PC-9 (cell line): ENCODE measurements at regions of chr1 and their contacts with region 1.

Region 1: DNA sequence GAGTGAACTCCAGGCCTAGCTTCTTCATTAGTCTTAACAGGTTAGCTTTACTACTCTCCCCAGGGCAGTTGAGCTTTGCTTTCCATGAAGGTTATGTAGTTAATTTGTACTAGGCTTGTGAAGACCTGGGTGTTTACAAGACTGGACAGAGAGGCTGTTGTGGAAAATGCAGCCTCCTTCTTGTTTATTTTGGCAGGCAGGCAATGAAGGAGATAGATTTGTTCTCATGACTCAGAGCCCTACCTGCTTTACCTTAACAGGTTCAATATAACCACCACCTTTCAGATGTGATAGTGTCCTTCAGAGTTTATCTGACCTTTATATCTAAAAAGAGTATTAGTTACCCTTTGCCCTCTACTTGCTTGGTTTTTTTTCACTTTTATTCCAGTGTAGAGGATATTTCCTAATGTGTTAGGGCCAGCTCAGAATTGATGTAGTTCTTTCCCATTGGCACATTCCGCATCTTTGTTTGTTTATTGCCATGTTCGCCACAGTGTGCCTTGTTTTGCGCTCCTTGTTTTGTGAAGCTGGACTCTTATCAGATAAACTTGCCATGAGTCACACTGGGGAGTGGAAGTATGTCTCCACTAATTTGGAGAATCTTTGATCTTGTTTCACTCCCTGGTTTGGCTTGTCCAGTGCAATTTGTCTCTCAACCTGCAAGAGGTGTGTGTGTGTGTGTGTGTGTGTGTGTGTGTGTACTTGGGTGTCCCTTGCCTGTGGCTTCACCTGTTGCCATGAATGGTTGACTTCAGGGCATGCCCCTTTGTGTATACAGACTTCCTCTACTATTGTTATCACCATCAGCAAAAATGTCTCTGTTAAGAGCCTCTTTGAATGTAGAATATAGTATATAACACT is 87.4 kb upstream of the MACF1 start:
- DNase-seq: peak; percentile 65 to 95
- H3K4me3 ChIP-seq: no peak overlapping the region
- H3K27ac ChIP-seq: peak overlapping the region; percentile 68
- H3K4me1 ChIP-seq: peaks cover 48% of the 10 kb centered on the region
- H3K27me3 ChIP-seq: no peaks in the 10 kb centered on the region
- CTCF ChIP-seq: no peak

Region 2: DNA sequence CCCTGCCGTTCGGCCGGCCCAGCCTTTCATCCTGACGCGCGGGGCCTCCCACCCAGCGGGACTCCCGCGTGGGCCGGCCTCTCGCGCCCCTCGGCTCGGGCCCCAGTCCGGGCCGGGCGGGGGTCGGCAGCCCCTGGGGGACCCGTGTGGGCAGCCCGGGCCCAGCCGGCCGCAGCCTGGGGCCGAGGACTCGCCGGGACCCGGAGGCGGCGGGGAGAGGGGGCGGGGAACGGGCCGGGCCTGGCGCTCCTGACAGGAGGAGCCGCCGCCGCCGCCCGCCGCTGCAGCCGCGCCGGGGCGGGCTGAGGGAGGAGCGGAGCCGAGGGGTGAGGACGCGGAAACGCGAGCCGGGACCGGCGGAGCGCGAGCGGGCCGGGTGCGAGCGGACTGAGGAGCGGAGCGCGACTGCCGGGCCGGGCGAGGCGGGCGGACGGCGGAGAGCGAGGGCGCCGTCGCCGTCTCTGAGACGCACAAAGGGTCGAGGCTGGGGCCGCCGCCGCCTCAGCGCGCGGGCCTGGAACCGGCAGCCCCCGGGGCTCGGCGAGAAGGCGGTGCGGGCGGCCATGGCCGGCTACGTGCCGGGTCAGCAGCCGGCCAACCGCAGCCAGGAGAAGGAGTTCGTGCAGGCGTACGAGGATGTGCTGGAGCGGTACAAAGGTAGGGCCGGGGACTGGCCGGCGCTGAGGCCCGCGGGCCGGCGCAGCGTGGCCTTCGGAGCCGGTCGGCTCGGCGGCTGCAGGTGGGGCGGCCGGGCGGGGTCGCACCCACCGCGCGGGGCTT is 11.8 kb before region 1 on chr1:
- CTCF ChIA-PET with region 1: no interaction called
- POLR2A ChIA-PET with region 1: no interaction called
- intact Hi-C with region 1: loop called (anchors 1 kb)
- DNase-seq: peak in 1 of 2 experiments; percentile 81
- H3K4me3 ChIP-seq: peak overlapping the region; percentile 95
- H3K27ac ChIP-seq: peak overlapping the region; percentile 74
- H3K4me1 ChIP-seq: peaks cover 57% of the 10 kb centered on the region
- H3K27me3 ChIP-seq: no peaks in the 10 kb centered on the region
- CTCF ChIP-seq: no peak

Region 3: DNA sequence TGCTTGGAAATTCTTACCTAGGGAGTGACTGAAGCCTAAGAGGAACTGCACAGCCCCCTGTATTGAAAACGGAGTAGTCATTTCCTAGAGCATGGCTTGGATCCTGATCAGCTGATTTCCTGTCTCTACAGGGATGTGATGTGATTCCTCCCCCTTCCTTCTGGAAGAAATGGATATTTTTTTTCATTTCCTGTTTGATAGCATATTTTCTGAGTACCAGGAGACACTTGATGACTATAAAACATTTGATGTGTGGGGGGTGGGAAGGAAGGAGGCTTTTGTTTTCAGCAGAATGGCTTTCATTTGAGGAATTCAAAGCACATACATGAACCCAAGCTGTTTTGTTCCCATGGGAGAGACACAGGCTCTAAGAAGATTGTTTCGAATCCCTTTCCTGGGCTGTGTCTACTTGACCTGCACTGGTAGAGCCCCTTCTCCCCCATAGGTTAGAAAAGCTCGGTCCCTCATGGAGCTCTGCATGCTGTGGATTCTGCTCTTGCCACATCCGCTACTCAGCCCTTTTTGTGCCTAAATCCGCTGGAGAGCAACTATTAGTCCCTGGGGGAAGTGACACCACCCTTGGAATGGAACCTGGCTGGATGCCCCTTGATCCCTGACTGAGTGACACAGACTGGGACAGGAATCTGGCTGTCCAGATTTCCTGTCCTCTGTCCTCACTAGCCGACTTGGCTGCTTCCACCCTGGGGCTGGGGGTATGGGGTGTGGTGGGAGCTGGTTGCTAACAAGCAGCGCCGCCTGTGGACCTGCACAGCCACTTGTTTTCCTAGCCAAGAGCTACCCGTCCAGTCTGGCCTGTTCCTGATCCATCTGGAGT is 15.6 kb after region 1 on chr1:
- CTCF ChIA-PET with region 1: interaction called, 4 read pairs
- POLR2A ChIA-PET with region 1: interaction called, 4 read pairs
- intact Hi-C with region 1: loop called (anchors 2 kb)
- DNase-seq: peak; percentile 94 to 95
- H3K4me3 ChIP-seq: no peak overlapping the region
- H3K27ac ChIP-seq: peak overlapping the region; percentile 77
- H3K4me1 ChIP-seq: peaks cover 70% of the 10 kb centered on the region
- H3K27me3 ChIP-seq: no peaks in the 10 kb centered on the region
- CTCF ChIP-seq: peak; percentile 67

Region 4: DNA sequence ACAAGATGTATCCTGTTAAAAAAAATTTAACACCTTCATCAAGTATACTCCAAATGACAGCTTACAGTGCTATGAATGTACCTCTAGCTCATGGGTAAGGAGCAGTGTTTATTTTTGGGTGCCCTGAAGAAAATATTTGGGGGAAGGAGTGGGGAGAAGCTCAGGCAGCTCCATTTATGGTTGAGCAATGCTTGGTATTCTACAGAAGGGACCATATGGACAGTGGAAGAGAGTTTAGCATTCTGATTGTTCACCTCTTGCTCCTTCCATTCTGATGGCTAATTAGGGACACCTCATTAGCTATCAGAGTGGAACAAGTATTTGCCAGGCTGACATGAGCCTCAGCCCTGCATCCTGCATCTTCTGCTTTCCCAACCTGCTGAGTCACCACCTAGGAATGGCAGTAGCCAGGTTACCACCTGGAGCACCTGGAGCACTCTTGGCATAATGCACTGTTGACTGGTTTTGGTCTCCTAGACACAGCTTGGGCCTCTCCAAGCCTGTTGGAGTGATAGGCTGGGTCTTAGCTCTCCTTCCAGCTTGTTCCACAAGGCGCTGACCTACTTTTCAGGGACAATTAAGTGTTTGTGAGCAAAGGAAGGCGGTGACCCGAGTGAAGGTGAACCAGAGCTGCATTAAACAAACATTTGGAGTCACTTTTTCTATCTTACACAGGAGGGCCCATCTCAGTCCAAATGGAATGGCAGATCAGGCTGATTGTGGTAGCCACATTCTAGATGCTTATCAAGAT is 25.5 kb after region 1 on chr1:
- CTCF ChIA-PET with region 1: no interaction called
- POLR2A ChIA-PET with region 1: no interaction called
- intact Hi-C with region 1: loop called (anchors 1 kb)
- DNase-seq: peak; percentile 91 to 96
- H3K4me3 ChIP-seq: no peak overlapping the region
- H3K27ac ChIP-seq: peak overlapping the region; percentile 43
- H3K4me1 ChIP-seq: peaks cover 26% of the 10 kb centered on the region
- H3K27me3 ChIP-seq: no peaks in the 10 kb centered on the region
- CTCF ChIP-seq: no peak

Region 5: DNA sequence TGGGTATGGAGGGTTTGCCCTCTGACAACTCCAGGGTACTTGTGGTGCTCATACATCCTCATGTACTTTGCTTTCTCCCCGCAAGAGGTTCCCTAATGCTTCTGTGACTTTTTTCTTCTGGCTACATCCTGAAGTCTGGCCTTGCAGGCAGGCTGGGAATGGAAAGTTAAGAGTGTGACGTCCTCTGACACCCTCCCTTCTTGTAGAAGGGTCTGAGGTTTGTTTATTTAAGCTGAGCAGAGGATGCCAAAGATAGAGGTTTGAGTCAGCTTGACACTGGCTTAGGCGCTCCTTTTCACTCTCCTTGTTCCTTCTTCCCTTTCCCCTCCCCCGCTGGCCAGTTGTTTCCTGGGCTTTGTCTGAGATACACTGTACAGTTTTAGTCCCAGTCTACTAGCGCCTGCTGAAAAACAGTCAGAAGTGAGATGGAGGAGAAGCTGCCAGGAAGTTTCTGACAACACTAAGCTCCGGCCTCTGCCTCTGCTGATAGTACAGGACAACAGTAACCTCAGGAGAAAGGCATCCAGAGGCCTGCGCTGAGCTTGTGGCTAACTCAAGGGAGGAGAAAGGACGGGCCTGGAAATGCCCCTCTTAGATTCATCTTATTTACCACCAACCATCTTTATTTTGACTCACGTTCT is 87.5 kb after region 1 on chr1 and contains the start of gene MACF1:
- CTCF ChIA-PET with region 1: interaction called, 10 read pairs
- POLR2A ChIA-PET with region 1: no interaction called
- intact Hi-C with region 1: no loop called
- DNase-seq: peak in 1 of 2 experiments; percentile 47
- H3K4me3 ChIP-seq: no peak within 1 kb of the TSS
- H3K27ac ChIP-seq: no peak within 1 kb of the TSS
- H3K4me1 ChIP-seq: 0 out of 2 replicates have a peak, but pooled peaks cover 5% of the 10 kb centered on the region
- H3K27me3 ChIP-seq: no peaks in the 10 kb centered on the region
- CTCF ChIP-seq: no peak
- total RNA-seq, gene MACF1: 189 and 199 TPM in 2 replicates